ENCODE measurements at regions of chr16 and their contacts with region 1.

Region 1: DNA sequence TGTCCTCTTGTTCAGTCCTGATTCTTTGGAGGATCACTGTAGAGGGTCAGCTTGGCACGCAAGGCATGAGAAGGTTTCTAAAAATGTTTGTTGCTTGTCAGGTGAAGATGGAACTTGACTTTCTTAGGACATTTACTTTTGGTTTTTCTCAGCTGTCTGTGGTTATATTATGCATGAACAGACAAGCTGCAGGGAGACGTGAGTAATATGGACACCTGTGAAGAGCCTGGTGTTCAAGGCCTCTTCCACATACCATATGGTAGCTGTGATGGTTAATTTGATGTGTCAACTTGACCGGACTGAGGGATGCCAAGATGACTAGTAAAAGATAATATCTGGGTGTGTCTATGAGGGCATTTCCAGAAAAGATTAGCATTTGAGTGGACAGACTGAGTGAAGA is 270.2 kb upstream of the CPHXL start:
- DNase-seq: peak; percentile 100
- H3K4me3 ChIP-seq: no peak overlapping the region
- H3K27ac ChIP-seq: peak overlapping the region; percentile 88
- H3K4me1 ChIP-seq: peaks cover 21% of the 10 kb centered on the region
- H3K27me3 ChIP-seq: no peaks in the 10 kb centered on the region
- CTCF ChIP-seq: no peak

Region 2: GRCh38 chr16:76059186-76059585 is 62.7 kb after region 1 on chr16:
- CTCF ChIA-PET with region 1: no interaction called
- dilution Hi-C with region 1: no loop called
- in situ Hi-C with region 1: no loop called
- intact Hi-C with region 1: loop called (anchors 2 kb)
- DNase-seq: peak; percentile 86
- H3K4me3 ChIP-seq: peak overlapping the region in 1 of 3 experiments; percentile 13
- H3K27ac ChIP-seq: peak overlapping the region; percentile 86
- H3K4me1 ChIP-seq: peaks cover 19% of the 10 kb centered on the region
- H3K27me3 ChIP-seq: no peaks in the 10 kb centered on the region
- CTCF ChIP-seq: no peak

Region 3: GRCh38 chr16:76081967-76082366 is 85.4 kb after region 1 on chr16:
- CTCF ChIA-PET with region 1: no interaction called
- dilution Hi-C with region 1: no loop called
- in situ Hi-C with region 1: no loop called
- intact Hi-C with region 1: loop called (anchors 1 kb)
- DNase-seq: peak; percentile 88
- H3K4me3 ChIP-seq: peak overlapping the region in 2 of 3 experiments; percentile 18 to 42
- H3K27ac ChIP-seq: peak overlapping the region; percentile 88
- H3K4me1 ChIP-seq: peaks cover 18% of the 10 kb centered on the region
- H3K27me3 ChIP-seq: no peaks in the 10 kb centered on the region
- CTCF ChIP-seq: no peak

Region 4: GRCh38 chr16:76121636-76122035 is 125.1 kb after region 1 on chr16:
- CTCF ChIA-PET with region 1: no interaction called
- dilution Hi-C with region 1: no loop called
- in situ Hi-C with region 1: no loop called
- intact Hi-C with region 1: loop called (anchors 10 kb)
- DNase-seq: no peak
- H3K4me3 ChIP-seq: no peak overlapping the region
- H3K27ac ChIP-seq: no peak overlapping the region
- H3K4me1 ChIP-seq: peaks cover 11% of the 10 kb centered on the region
- H3K27me3 ChIP-seq: no peaks in the 10 kb centered on the region
- CTCF ChIP-seq: no peak

Measured in mammary epithelial cell (primary cell).